Breast epithelium (tissue), 4 donors: ENCODE measurements at regions of chr6 and their contacts with region 1.

Region 1: GRCh38 chr6:122454673-122455072 is 16.9 kb downstream of the SERINC1 start:
- DNase-seq: no peak
- H3K4me3 ChIP-seq: no peak overlapping the region
- H3K27ac ChIP-seq: no peak overlapping the region
- H3K4me1 ChIP-seq: peaks cover 0 to 8% of the 10 kb centered on the region in 2 donors
- H3K27me3 ChIP-seq: no peaks in the 10 kb centered on the region
- CTCF ChIP-seq: no peak
- POLR2A ChIP-seq: no peak

Region 2: DNA sequence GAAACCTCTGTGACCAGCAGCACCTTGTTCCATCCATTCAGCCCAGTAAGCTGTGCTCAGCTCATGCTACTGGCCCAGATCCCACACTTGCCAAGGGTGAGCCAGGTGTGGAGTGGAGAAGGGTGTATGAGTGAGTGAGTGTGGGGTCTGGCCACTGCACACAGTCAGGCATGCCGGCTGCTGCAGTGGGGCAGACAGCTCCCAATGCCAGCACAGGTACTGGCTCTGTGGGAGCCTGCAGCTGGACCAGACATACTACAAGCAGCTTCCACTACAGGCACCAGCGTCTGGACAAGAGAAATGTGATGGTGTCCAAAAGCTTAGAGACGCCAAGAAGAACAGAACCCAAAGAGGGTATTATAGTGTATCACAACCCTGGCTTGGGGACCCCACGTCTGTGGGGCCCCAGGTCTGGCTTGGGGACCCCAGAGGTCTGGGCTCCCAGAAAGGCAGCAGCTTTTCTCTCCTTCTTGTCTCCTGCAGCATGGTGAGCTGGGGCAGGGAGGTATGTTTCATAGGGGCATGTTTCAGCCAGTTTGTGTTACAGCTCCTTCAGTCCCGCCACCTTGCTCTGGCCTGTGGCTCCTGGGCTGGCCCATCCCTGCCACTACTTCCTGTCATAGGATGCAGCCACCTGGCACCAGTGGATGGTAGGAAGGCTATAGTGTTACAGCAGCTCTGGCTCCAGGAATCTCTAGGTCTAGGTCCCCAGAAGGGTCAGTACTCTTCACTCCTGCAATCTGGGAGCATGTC is 207.6 kb before region 1 on chr6:
- intact Hi-C with region 1: loop called (anchors 5 kb)
- DNase-seq: no peak
- H3K4me3 ChIP-seq: no peak overlapping the region
- H3K27ac ChIP-seq: no peak overlapping the region
- H3K4me1 ChIP-seq: no peaks in the 10 kb centered on the region
- H3K27me3 ChIP-seq: no peaks in the 10 kb centered on the region
- CTCF ChIP-seq: no peak
- POLR2A ChIP-seq: no peak